ENCODE measurements at regions of chr10 and their contacts with region 1.

Region 1: DNA sequence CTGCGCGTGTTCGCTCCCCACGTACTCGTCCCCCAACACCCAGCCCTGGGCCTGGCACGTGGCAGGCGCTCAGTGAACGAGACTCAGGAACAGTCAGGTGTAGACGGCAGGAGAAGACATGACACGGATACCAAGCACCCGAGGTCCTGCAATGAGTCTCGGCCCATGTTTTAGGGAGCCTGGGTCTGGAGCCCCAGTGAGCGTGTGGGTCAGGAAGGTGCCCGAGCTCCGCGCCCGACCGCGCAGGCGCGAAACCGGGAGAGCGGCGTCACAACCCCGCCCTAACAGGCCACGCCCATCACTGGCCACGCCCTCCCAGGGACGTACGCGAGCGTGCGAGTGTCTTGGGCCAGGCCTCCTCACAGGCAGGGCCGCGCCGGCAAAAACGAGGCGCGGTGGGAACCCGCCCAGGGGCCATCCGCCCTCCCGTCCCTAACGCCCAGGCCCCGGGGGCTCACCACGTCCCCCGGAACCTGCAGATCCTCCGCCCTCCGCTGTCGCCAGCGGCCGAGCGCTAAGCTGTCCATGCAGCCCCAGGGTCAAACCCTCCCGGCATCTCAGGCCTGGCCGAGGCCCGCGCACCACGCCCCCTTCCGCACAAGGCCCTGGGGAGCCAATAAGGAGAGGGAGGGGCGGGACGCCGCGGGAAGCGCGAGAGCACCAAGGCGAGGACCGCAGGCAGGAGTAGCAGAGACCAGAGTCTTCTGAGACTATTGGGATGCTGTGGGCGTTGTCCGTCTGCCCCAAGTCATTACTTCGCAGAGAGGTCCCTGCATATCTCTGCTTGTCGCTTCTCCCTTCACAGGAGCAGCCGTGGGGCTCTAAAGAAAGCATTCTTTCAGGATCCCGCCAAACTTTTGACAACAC is at the start of gene C10orf143:
- DNase-seq: peak; percentile 92
- ATAC-seq: peak; percentile 88
- H3K4me3 ChIP-seq: peak within 1 kb of the TSS; percentile 65 to 93 (median 73)
- H3K27ac ChIP-seq: peak within 1 kb of the TSS; percentile 87
- H3K4me1 ChIP-seq: peaks cover 23% of the 10 kb centered on the region
- H3K27me3 ChIP-seq: peaks cover 0 to 4% of the 10 kb centered on the region in 2 experiments; a peak in 1 of 5 replicates
- CTCF ChIP-seq: no peak
- EP300 ChIP-seq: no peak
- POLR2A ChIP-seq: peak; percentile 84 to 95
- RAD21 ChIP-seq: no peak
- total RNA-seq, gene C10orf143: 0.84 and 0.91 TPM in 2 replicates

Region 2: DNA sequence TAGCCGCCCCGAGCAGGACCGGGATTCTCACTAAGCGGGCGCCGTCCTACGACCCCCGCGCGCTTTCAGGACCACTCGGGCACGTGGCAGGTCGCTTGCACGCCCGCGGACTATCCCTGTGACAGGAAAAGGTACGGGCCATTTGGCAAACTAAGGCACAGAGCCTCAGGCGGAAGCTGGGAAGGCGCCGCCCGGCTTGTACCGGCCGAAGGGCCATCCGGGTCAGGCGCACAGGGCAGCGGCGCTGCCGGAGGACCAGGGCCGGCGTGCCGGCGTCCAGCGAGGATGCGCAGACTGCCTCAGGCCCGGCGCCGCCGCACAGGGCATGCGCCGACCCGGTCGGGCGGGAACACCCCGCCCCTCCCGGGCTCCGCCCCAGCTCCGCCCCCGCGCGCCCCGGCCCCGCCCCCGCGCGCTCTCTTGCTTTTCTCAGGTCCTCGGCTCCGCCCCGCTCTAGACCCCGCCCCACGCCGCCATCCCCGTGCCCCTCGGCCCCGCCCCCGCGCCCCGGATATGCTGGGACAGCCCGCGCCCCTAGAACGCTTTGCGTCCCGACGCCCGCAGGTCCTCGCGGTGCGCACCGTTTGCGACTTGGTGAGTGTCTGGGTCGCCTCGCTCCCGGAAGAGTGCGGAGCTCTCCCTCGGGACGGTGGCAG is 643.6 kb before region 1 on chr10 and contains the start of gene MGMT:
- CTCF ChIA-PET with region 1: no interaction called
- POLR2A ChIA-PET with region 1: no interaction called
- in situ Hi-C with region 1: no loop called
- intact Hi-C with region 1: loop called (anchors 10 kb)
- DNase-seq: peak; percentile 62
- ATAC-seq: peak; percentile 54
- H3K4me3 ChIP-seq: peak within 1 kb of the TSS; percentile 68 to 76 (median 69); a peak in 5 of 6 replicates
- H3K27ac ChIP-seq: peak within 1 kb of the TSS; percentile 86
- H3K4me1 ChIP-seq: peaks cover 87% of the 10 kb centered on the region
- H3K27me3 ChIP-seq: no peaks in the 10 kb centered on the region
- CTCF ChIP-seq: no peak
- EP300 ChIP-seq: no peak
- POLR2A ChIP-seq: peak; percentile 42 to 76; a peak in 3 of 4 replicates
- RAD21 ChIP-seq: no peak
- total RNA-seq, gene MGMT: 19.5 and 20.7 TPM in 2 replicates

Region 3: GRCh38 chr10:130021383-130021950 is 89.0 kb before region 1 on chr10:
- CTCF ChIA-PET with region 1: no interaction called
- POLR2A ChIA-PET with region 1: no interaction called
- in situ Hi-C with region 1: no loop called
- intact Hi-C with region 1: no loop called
- DNase-seq: no peak
- ATAC-seq: no peak
- H3K4me3 ChIP-seq: no peak overlapping the region
- H3K27ac ChIP-seq: no peak overlapping the region
- H3K4me1 ChIP-seq: no peaks in the 10 kb centered on the region
- H3K27me3 ChIP-seq: peaks cover 20 to 68% of the 10 kb centered on the region in 2 experiments
- CTCF ChIP-seq: no peak
- EP300 ChIP-seq: no peak
- POLR2A ChIP-seq: no peak
- RAD21 ChIP-seq: no peak

Region 4: DNA sequence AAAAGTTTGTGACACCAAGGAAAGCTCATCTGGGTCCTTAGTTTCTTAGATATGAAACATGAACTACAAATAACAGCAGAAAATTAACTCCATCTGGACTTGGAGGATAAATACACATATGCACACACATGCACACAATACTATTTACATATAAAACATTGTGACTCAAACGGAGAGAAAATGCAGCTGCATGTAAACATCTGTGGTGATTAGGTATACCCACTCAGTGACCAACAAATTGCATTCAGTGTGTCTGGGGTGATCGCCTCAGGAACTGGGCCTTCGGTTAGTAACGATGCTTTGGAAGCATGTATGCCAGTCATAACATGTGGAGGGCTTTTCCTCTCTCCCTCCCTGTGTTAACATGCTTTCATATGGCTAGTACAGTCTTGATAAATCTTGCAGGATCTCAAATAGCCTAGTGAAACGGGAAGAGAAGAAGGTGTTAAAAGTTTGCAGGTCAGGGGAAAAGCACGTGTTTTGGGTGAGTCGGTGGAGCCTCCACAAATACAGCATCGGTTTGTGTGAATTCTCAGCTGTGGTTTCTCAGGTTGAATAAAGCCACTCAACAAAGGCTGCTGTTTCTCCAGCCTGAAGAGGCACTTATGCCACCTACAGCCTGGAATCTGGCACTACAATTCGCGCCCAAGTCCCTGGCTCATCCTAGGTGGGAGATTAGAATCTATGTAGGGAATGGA is 17.0 kb after region 1 on chr10:
- CTCF ChIA-PET with region 1: interaction called, 3 read pairs
- POLR2A ChIA-PET with region 1: interaction called, 18 read pairs
- in situ Hi-C with region 1: no loop called
- intact Hi-C with region 1: no loop called
- DNase-seq: peak; percentile 65
- ATAC-seq: peak; percentile 97
- H3K4me3 ChIP-seq: no peak overlapping the region
- H3K27ac ChIP-seq: no peak overlapping the region
- H3K4me1 ChIP-seq: peaks cover 4% of the 10 kb centered on the region; the same call in 1 of the 2 replicates
- H3K27me3 ChIP-seq: peaks cover 0 to 18% of the 10 kb centered on the region in 2 experiments; a peak in 2 of 5 replicates
- CTCF ChIP-seq: peak; percentile 84
- EP300 ChIP-seq: no peak
- POLR2A ChIP-seq: no peak
- RAD21 ChIP-seq: peak; percentile 40; the same call in 1 of the 2 replicates

Region 5: DNA sequence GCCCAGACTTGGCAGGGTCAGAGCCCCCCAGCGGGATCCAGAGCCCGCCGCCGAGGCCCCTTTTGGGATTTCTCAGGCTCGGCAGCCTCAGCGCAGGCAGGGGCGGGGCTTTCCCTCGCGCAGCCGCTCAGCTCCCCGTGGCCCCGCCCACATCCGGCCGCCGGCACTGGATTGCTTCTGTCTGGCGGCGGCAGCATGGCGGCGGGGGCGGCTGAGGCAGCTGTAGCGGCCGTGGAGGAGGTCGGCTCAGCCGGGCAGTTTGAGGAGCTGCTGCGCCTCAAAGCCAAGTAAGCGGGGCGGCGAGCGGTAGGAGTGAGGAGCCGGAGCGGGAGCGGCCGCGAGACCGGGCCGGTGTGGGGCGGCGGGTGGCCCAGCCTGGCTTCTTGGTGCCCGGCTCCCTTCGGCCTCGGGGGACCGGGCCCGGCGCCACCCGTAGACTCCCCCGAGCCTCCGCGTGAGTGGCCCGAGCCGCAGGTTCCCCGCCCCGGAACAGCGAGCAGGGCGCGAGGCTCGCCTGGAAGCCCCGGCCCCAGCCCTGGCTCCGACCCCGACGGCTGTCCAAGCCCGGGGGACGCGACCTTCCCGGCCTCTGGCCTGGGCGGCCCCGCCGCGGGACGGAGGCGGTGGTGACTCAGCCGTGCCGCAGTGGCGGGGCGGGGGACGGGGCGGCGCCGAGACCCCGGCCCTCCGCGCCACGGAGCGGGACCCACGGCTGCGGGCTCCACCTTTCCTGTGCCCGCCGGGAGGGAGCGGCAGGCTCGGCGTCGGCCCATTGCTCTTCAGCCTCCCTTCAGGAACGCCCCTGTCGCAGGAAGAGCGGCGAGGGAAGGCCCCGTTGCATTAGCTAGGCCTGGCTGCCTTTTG is 26.0 kb after region 1 on chr10 and contains the start of gene GLRX3:
- CTCF ChIA-PET with region 1: no interaction called
- POLR2A ChIA-PET with region 1: interaction called, 221 read pairs
- in situ Hi-C with region 1: no loop called
- intact Hi-C with region 1: loop called (anchors 1 kb)
- DNase-seq: peak; percentile 68
- ATAC-seq: peak; percentile 80
- H3K4me3 ChIP-seq: peak within 1 kb of the TSS; percentile 66 to 90 (median 74)
- H3K27ac ChIP-seq: peak within 1 kb of the TSS; percentile 81
- H3K4me1 ChIP-seq: peaks cover 56% of the 10 kb centered on the region
- H3K27me3 ChIP-seq: peaks cover 0 to 13% of the 10 kb centered on the region in 2 experiments; a peak in 2 of 5 replicates
- CTCF ChIP-seq: 0 out of 2 replicates have a peak, but pooled peaks have one; percentile 3
- EP300 ChIP-seq: no peak
- POLR2A ChIP-seq: peak; percentile 64 to 79; a peak in 3 of 4 replicates
- RAD21 ChIP-seq: peak; percentile 26; the same call in 1 of the 2 replicates
- total RNA-seq, gene GLRX3: 135 and 185 TPM in 2 replicates

Region 6: GRCh38 chr10:130179640-130180039 is 69.2 kb after region 1 on chr10:
- CTCF ChIA-PET with region 1: interaction called, 4 read pairs
- POLR2A ChIA-PET with region 1: no interaction called
- in situ Hi-C with region 1: no loop called
- intact Hi-C with region 1: loop called (anchors 2 kb)
- DNase-seq: peak; percentile 54
- ATAC-seq: peak; percentile 80
- H3K4me3 ChIP-seq: no peak overlapping the region
- H3K27ac ChIP-seq: no peak overlapping the region
- H3K4me1 ChIP-seq: no peaks in the 10 kb centered on the region
- H3K27me3 ChIP-seq: no peaks in the 10 kb centered on the region
- CTCF ChIP-seq: peak; percentile 50
- EP300 ChIP-seq: no peak
- POLR2A ChIP-seq: no peak
- RAD21 ChIP-seq: no peak

Measured in HepG2 (cell line).